ENCODE measurements at regions of chr9 and their contacts with region 1.

Region 1: DNA sequence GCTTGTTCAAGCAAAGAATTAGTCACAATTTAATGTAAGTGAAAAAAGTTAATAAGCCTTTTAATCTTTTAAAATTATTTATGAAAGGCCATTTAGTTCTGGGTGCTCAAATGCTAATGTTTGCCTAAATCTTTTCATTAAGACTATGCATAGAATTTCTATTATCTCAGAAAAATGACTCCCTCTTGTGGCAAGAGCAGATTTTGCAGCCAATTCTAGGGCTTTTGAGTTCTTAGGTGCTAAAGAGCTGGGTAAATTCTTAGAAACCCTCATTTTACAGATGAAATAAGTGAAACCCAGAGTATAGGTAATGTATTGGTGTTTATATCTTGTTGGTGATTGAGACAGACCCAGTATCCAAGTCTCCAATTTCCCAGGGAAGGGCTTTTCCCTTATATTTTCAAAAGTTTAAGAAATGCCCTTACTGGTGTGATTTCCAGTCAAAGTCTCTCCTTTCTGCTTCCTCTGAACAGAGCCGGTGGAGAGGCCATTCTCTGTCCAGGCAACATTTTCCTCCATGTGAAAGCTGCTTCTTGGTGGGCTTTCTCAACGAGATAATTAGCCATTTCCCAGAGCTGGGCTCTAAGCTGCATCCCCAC is 24.1 kb upstream of the PCSK5 start:
- DNase-seq: peak; percentile 71
- ATAC-seq: peak; percentile 30
- H3K4me3 Mint-ChIP-seq: no peak overlapping the region
- H3K27ac Mint-ChIP-seq: no peak overlapping the region
- H3K4me1 Mint-ChIP-seq: peaks cover 18% of the 10 kb centered on the region
- H3K27me3 Mint-ChIP-seq: no peaks in the 10 kb centered on the region
- CTCF ChIP-seq: peak; percentile 76

Region 2: DNA sequence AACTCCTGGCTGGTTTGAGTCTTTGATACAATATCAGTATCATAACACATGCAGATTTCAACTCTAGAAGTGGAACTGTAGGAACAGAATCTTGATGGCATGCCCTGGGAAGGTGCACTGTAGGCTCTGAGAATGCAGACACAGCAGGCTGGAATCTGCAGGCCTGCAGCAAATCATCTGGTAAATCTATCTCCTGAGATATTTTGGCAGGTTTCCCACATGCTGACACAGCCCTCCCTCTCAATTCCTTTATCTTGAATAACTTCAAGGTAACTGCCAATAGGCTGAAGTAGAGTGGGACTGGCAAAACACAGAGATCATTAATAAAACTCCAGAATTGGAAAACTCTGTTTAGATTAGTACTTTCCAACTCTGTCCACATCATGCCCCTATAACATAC is 153.7 kb before region 1 on chr9:
- CTCF ChIA-PET with region 1: no interaction called
- POLR2A ChIA-PET with region 1: no interaction called
- intact Hi-C with region 1: no loop called
- DNase-seq: no peak
- ATAC-seq: no peak
- H3K4me3 Mint-ChIP-seq: no peak overlapping the region
- H3K27ac Mint-ChIP-seq: no peak overlapping the region
- H3K4me1 Mint-ChIP-seq: no peaks in the 10 kb centered on the region
- H3K27me3 Mint-ChIP-seq: peaks cover 1% of the 10 kb centered on the region
- CTCF ChIP-seq: no peak

Region 3: GRCh38 chr9:75855509-75855908 is 10.9 kb before region 1 on chr9:
- CTCF ChIA-PET with region 1: interaction called, 13 read pairs
- POLR2A ChIA-PET with region 1: interaction called, 3 read pairs
- intact Hi-C with region 1: no loop called
- DNase-seq: peak; percentile 22
- ATAC-seq: no peak
- H3K4me3 Mint-ChIP-seq: no peak overlapping the region
- H3K27ac Mint-ChIP-seq: no peak overlapping the region
- H3K4me1 Mint-ChIP-seq: no peaks in the 10 kb centered on the region
- H3K27me3 Mint-ChIP-seq: no peaks in the 10 kb centered on the region
- CTCF ChIP-seq: peak; percentile 17

Region 4: GRCh38 chr9:75974016-75974766 is 107.8 kb after region 1 on chr9:
- CTCF ChIA-PET with region 1: no interaction called
- POLR2A ChIA-PET with region 1: no interaction called
- intact Hi-C with region 1: no loop called
- DNase-seq: no peak
- ATAC-seq: no peak
- H3K4me3 Mint-ChIP-seq: no peak overlapping the region
- H3K27ac Mint-ChIP-seq: no peak overlapping the region
- H3K4me1 Mint-ChIP-seq: peaks cover 26% of the 10 kb centered on the region
- H3K27me3 Mint-ChIP-seq: no peaks in the 10 kb centered on the region
- CTCF ChIP-seq: no peak

Region 5: DNA sequence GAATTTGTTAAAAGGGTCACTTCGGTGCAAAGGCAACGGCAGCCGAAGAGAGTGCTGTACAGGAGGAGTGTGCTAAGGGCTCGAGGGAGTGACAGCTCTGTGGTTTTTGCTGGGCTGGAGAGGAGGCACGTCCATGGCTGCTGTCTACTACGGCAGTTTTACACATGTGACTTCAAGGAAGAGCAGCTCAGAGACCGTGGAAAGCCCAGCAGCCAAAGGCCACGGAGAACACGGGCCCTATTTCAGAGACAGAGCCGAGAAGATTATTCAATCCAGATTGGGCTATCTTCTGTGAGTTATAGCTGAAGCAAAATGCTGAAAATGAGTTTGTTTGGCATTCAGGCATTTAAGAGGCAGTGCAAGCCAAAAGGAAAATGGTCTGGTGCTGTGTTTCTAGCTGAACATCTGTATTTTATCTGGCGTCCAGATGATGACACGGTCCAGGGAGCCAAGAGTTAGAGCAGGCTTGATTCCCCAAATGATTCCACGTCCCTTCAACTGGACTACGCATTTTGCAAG is 431.4 kb after region 1 on chr9:
- CTCF ChIA-PET with region 1: interaction called, 34 read pairs
- POLR2A ChIA-PET with region 1: no interaction called
- intact Hi-C with region 1: loop called (anchors 10 kb)
- DNase-seq: no peak
- ATAC-seq: no peak
- H3K4me3 Mint-ChIP-seq: no peak overlapping the region
- H3K27ac Mint-ChIP-seq: no peak overlapping the region
- H3K4me1 Mint-ChIP-seq: peaks cover 4% of the 10 kb centered on the region
- H3K27me3 Mint-ChIP-seq: no peaks in the 10 kb centered on the region
- CTCF ChIP-seq: no peak

Measured in activated CD8-positive, alpha-beta T cell treated with anti-CD3 and anti-CD28 coated beads for 36 hours (primary cell).